CD8-positive, alpha-beta T cell (primary cell): ENCODE measurements at regions of chr2 and their contacts with region 1.

Region 1: GRCh38 chr2:208175069-208175839 is 11.9 kb upstream of the CRYGA start:
- DNase-seq: peak; percentile 27 to 74 (median 57)
- ATAC-seq: peak; percentile 96
- H3K4me3 ChIP-seq: no peak overlapping the region
- H3K4me3 Mint-ChIP-seq: no peak overlapping the region
- H3K27ac ChIP-seq: no peak overlapping the region
- H3K27ac Mint-ChIP-seq: no peak overlapping the region
- H3K4me1 ChIP-seq: no peaks in the 10 kb centered on the region
- H3K4me1 Mint-ChIP-seq: peaks cover 4% of the 10 kb centered on the region
- H3K27me3 ChIP-seq: no peaks in the 10 kb centered on the region
- H3K27me3 Mint-ChIP-seq: peaks cover 12% of the 10 kb centered on the region
- CTCF ChIP-seq: peak; percentile 78

Region 2: GRCh38 chr2:208164951-208165755 is 10.1 kb before region 1 on chr2:
- CTCF ChIA-PET with region 1: interaction called, 16 read pairs
- POLR2A ChIA-PET with region 1: no interaction called
- intact Hi-C with region 1: no loop called
- DNase-seq: no peak
- ATAC-seq: no peak
- H3K4me3 ChIP-seq: no peak overlapping the region
- H3K4me3 Mint-ChIP-seq: no peak overlapping the region
- H3K27ac ChIP-seq: no peak overlapping the region
- H3K27ac Mint-ChIP-seq: no peak overlapping the region
- H3K4me1 ChIP-seq: no peaks in the 10 kb centered on the region
- H3K4me1 Mint-ChIP-seq: no peaks in the 10 kb centered on the region
- H3K27me3 ChIP-seq: no peaks in the 10 kb centered on the region
- H3K27me3 Mint-ChIP-seq: peaks cover 15% of the 10 kb centered on the region
- CTCF ChIP-seq: no peak

Region 3: DNA sequence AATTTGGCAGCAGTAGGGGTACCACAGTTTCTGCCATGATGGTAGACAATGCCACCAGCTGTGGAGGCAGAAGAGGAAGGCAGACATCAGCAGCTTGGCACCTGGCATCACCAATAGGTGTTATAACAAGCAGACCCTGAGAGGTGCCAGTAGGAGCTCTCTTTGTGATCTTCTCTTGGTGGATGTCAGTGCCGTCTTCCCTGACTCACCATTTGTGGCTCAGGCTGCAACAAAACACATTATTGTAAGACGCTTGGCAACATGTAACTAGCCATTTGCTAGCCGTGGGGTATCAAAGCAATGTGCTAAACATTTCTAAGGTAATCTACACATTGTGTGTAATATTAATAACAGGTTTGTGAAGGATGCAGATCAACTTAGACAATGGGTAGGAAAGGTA is 25.9 kb after region 1 on chr2:
- CTCF ChIA-PET with region 1: interaction called, 10 read pairs
- POLR2A ChIA-PET with region 1: no interaction called
- intact Hi-C with region 1: no loop called
- DNase-seq: no peak
- ATAC-seq: no peak
- H3K4me3 ChIP-seq: no peak overlapping the region
- H3K4me3 Mint-ChIP-seq: no peak overlapping the region
- H3K27ac ChIP-seq: no peak overlapping the region
- H3K27ac Mint-ChIP-seq: no peak overlapping the region
- H3K4me1 ChIP-seq: no peaks in the 10 kb centered on the region
- H3K4me1 Mint-ChIP-seq: no peaks in the 10 kb centered on the region
- H3K27me3 ChIP-seq: no peaks in the 10 kb centered on the region
- H3K27me3 Mint-ChIP-seq: peaks cover 2% of the 10 kb centered on the region
- CTCF ChIP-seq: no peak

Region 4: GRCh38 chr2:208254871-208255556 is 79.8 kb after region 1 on chr2 and contains the start of gene IDH1:
- CTCF ChIA-PET with region 1: interaction called, 20 read pairs
- POLR2A ChIA-PET with region 1: interaction called, 3 read pairs
- intact Hi-C with region 1: loop called in 1 of 2 experiments (anchors 1 kb)
- DNase-seq: peak; percentile 83 to 97 (median 93)
- ATAC-seq: peak; percentile 85
- H3K4me3 ChIP-seq: peak within 1 kb of the TSS; percentile 99
- H3K4me3 Mint-ChIP-seq: peak within 1 kb of the TSS; percentile 94
- H3K27ac ChIP-seq: peak within 1 kb of the TSS; percentile 31 to 51
- H3K27ac Mint-ChIP-seq: peak within 1 kb of the TSS; percentile 83
- H3K4me1 ChIP-seq: peaks cover 13% of the 10 kb centered on the region
- H3K4me1 Mint-ChIP-seq: peaks cover 31% of the 10 kb centered on the region
- H3K27me3 ChIP-seq: no peaks in the 10 kb centered on the region
- H3K27me3 Mint-ChIP-seq: no peaks in the 10 kb centered on the region
- CTCF ChIP-seq: no peak
- total RNA-seq, gene IDH1: 3.0 to 4.0 TPM

Region 5: DNA sequence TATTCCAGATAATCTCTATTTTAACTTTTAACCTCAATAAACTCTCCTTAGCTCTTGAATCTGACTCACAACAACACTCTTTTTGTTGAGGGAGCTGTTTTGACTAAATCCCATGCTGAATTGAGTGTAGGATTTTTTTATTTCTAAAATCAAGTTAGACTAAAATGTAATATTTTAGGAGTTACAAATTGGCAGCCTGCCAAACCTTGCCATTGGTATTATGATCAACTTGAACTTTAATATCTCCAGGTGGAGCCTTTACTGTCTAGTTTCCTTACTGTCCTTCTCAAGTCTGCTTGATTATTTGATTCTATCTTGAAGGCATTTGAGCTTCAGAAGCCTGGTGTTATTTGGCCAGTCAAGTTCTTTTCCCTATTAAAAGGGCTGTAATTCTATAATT is 99.5 kb after region 1 on chr2:
- CTCF ChIA-PET with region 1: interaction called, 7 read pairs
- POLR2A ChIA-PET with region 1: no interaction called
- intact Hi-C with region 1: loop called in 1 of 2 experiments (anchors 5 kb)
- DNase-seq: no peak
- ATAC-seq: no peak
- H3K4me3 ChIP-seq: no peak overlapping the region
- H3K4me3 Mint-ChIP-seq: no peak overlapping the region
- H3K27ac ChIP-seq: no peak overlapping the region
- H3K27ac Mint-ChIP-seq: peak overlapping the region; percentile 19
- H3K4me1 ChIP-seq: no peaks in the 10 kb centered on the region
- H3K4me1 Mint-ChIP-seq: peaks cover 33% of the 10 kb centered on the region
- H3K27me3 ChIP-seq: no peaks in the 10 kb centered on the region
- H3K27me3 Mint-ChIP-seq: no peaks in the 10 kb centered on the region
- CTCF ChIP-seq: no peak